Activated CD8-positive, alpha-beta T cell treated with anti-CD3 and anti-CD28 coated beads, Interleukin-2, amount 10 ng/mL, durations not matched to agents 7 days and 5 days (primary cell): ENCODE measurements at regions of chr10 and their contacts with region 1.

Region 1: DNA sequence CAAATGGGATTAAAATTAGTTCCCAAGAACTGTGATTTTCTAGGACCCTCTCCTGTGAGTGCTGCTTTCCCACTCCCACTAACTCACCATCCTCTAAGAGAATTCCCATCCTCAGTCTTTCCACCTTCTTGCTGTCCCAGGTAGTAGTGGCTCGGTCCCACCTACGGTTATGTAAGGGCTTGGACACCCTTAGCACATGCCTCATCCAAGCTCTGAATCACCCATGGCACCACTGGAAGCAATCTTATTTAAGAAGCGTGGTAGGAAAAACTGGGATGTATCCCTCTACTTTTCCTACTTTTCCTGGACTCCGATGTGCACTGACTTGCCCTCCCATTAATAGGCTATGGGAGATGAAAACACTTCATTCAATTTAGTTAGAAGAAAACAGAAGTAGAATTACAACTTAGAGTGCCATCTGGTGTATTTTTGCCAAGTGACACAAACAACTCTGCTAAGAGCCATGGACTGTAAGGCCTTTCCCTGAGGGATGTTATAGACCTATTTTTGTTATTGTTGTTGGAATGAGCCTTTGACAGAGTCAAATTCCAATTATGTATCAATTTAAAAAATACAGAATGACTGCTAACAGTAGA is 13.7 kb upstream of the ANKRD22 start:
- DNase-seq: no peak
- ATAC-seq: no peak
- H3K4me3 Mint-ChIP-seq: no peak overlapping the region
- H3K27ac Mint-ChIP-seq: no peak overlapping the region
- H3K4me1 Mint-ChIP-seq: peaks cover 2% of the 10 kb centered on the region
- H3K27me3 Mint-ChIP-seq: peaks cover 3% of the 10 kb centered on the region

Region 2: GRCh38 chr10:88769384-88769783 is 96.0 kb before region 1 on chr10:
- CTCF ChIA-PET with region 1: no interaction called
- POLR2A ChIA-PET with region 1: no interaction called
- DNase-seq: no peak
- ATAC-seq: no peak
- H3K4me3 Mint-ChIP-seq: no peak overlapping the region
- H3K27ac Mint-ChIP-seq: no peak overlapping the region
- H3K4me1 Mint-ChIP-seq: no peaks in the 10 kb centered on the region
- H3K27me3 Mint-ChIP-seq: peaks cover 21% of the 10 kb centered on the region

Region 3: GRCh38 chr10:88880282-88881076 is 15.1 kb after region 1 on chr10:
- CTCF ChIA-PET with region 1: interaction called, 7 read pairs
- POLR2A ChIA-PET with region 1: interaction called, 12 read pairs
- DNase-seq: peak; percentile 87
- ATAC-seq: peak; percentile 81
- H3K4me3 Mint-ChIP-seq: peak overlapping the region; percentile 98
- H3K27ac Mint-ChIP-seq: peak overlapping the region; percentile 98
- H3K4me1 Mint-ChIP-seq: peaks cover 70% of the 10 kb centered on the region
- H3K27me3 Mint-ChIP-seq: no peaks in the 10 kb centered on the region